Dendritic cell treated with granulocyte-macrophage colony-stimulating factor and Interleukin-4, amounts not matched to agents 40 ng/mL and 50 ng/mL, for 4 days (primary cell): ENCODE measurements at regions of chr1 and their contacts with region 1.

Region 1: DNA sequence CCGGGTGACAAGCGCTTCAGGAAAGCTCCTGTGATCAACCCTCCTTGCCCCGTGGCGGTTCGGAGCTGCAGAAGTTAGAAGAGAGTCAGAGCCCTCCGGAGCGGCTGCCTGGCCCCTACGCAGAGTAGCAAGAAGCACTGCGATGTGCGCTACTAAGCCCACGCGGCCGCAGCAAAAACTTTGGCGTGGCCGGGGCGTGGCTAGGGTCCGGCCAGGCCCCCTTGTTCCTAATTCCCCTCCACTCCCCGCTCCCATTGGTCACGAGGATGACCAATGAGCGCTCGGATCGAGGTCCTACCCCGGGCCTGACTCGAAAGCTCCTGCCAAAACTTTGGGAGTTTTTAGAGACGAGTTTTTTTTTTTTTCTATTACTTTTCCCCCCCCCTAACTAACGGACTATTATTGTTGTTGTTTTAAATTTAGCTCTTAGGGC is at the start of gene HLX:
- H3K4me3 Mint-ChIP-seq: peak within 1 kb of the TSS; percentile 99
- H3K27ac Mint-ChIP-seq: peak within 1 kb of the TSS; percentile 100
- H3K4me1 Mint-ChIP-seq: peaks cover 79% of the 10 kb centered on the region
- H3K27me3 Mint-ChIP-seq: peaks cover 13% of the 10 kb centered on the region

Region 2: DNA sequence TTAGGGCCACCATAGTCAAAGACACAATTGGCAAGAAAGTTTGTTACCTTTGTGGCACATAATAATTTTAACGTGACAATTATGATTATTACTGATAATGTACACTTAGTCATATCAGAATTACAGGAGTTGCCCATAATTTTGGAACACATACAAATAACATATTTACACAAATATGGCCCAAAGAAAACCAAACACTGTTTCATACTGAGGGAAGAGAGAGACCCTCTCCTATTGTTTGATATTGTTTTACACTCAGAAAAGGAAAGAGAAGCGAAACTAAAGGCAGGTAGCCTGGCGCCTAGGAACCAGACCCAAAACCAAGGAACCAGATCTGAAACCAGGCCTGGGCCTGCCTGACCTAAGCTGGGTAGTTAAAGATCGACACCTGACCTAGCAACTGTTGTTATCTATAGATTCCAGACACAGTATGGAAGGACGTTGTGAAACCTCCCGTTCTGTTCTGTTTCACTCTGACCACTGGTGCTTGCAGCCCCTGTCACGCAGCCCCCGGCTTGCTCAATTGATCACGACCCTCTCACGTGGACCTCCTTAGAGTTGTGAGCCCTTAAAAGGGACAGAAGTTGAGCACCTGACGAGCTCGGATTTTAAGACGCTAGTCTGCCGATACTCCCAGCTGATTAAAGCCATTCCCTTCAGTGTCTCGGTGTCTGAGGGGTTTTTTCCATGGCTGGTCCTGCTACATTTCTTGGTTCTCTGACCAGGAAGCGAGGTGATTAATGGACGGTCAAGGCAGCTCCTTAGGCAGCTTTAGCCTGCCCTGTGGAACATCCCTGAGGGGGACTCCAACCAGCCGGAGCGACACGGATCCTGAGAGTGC is 161.1 kb before region 1 on chr1:
- intact Hi-C with region 1: no loop called
- H3K4me3 Mint-ChIP-seq: no peak overlapping the region
- H3K27ac Mint-ChIP-seq: no peak overlapping the region
- H3K4me1 Mint-ChIP-seq: no peaks in the 10 kb centered on the region
- H3K27me3 Mint-ChIP-seq: peaks cover 2% of the 10 kb centered on the region

Region 3: GRCh38 chr1:220818421-220819173 is 60.5 kb before region 1 on chr1:
- intact Hi-C with region 1: no loop called
- H3K4me3 Mint-ChIP-seq: no peak overlapping the region
- H3K27ac Mint-ChIP-seq: no peak overlapping the region
- H3K4me1 Mint-ChIP-seq: peaks cover 5% of the 10 kb centered on the region
- H3K27me3 Mint-ChIP-seq: no peaks in the 10 kb centered on the region

Region 4: GRCh38 chr1:220999872-221000863 is 121.1 kb after region 1 on chr1:
- intact Hi-C with region 1: loop called (anchors 2 kb)
- H3K4me3 Mint-ChIP-seq: no peak overlapping the region
- H3K27ac Mint-ChIP-seq: no peak overlapping the region
- H3K4me1 Mint-ChIP-seq: no peaks in the 10 kb centered on the region
- H3K27me3 Mint-ChIP-seq: peaks cover 23% of the 10 kb centered on the region

Region 5: DNA sequence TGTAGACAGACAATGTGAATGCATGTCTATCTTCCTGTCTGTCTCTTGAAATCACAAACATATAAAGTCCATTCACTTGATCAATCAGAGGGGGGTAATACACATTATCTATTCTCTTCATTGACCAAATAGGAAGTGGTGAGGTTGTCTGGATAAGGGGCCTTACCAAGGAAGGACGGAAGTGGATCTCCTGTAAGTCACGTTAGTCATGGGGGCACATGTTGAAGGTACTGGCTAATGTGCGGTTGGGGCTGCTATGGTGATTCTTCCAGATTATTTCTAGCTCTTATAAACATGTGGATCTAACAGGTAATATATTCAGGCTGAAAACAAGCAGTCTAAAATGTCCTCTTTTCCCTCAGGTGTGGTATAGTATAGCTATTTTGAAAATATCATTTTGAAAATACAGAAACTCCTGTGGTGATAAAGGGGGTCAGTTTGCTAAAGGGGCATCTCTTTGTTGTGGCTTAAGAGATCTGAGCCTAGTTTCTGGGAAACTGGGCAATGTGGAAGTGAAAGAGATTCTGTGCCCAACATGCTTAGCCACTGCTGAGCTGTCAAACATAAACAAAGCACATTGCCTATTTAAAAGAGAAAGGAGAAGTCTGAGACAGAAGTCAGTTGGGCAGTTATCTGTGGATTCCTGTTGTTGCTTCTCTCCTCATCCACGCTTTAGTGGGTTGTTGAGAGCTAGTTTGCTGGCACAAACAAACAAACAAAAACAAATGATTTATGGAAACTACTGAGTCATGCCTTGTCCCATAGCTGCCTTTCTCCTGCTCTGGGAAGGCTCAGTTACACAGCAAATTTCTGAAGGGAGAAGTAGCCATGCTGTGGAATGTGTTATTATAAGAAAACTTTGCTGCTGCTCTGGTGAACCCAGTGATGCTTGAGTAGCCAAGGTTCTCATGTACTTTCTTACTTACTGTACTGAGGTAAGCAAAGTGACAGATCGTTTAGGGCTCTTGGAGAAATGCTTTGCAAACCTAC is 167.0 kb after region 1 on chr1:
- intact Hi-C with region 1: loop called (anchors 2 kb)
- H3K4me3 Mint-ChIP-seq: no peak overlapping the region
- H3K27ac Mint-ChIP-seq: peak overlapping the region; percentile 91
- H3K4me1 Mint-ChIP-seq: peaks cover 56% of the 10 kb centered on the region
- H3K27me3 Mint-ChIP-seq: no peaks in the 10 kb centered on the region

Region 6: DNA sequence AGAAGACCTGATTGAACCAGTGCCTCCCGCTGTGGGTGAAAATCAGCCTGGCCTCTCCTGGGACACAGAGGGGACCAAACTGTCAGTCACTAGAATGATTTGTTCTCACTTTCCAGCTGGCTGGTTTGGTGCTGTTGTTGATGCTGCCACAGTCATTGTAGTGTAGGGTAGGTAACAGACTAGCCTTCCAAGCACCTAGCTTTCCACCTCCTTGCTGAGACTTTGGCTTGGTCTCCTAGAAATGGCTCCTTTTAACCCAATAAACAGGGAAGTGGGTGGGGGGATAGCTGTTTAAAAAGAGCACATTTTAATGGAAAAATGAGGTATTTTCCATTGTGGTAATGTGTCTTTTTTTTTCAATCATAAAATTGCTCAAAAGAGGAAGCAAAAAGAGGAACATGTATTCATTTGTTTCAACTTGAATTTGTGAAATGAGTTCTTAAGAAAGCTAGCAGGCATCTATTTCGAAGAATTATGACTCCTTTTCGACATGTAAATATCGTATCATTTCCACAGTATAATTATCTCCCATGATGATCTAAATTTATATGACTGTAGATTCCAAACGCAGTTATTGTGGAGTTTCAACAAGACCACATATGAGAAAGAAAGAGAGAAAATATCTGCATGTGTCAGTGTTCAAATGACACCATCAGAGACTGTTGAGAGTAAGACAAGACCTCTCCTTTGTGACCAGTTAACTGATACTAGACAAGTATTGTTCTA is 190.2 kb after region 1 on chr1:
- intact Hi-C with region 1: loop called (anchors 2 kb)
- H3K4me3 Mint-ChIP-seq: peak overlapping the region; percentile 20
- H3K27ac Mint-ChIP-seq: peak overlapping the region; percentile 95
- H3K4me1 Mint-ChIP-seq: peaks cover 82% of the 10 kb centered on the region
- H3K27me3 Mint-ChIP-seq: peaks cover 2% of the 10 kb centered on the region

Region 7: GRCh38 chr1:221097479-221098383 is 218.6 kb after region 1 on chr1:
- intact Hi-C with region 1: loop called (anchors 1 kb)
- H3K4me3 Mint-ChIP-seq: peak overlapping the region; percentile 1
- H3K27ac Mint-ChIP-seq: peak overlapping the region; percentile 92
- H3K4me1 Mint-ChIP-seq: peaks cover 72% of the 10 kb centered on the region
- H3K27me3 Mint-ChIP-seq: peaks cover 5% of the 10 kb centered on the region

Region 8: DNA sequence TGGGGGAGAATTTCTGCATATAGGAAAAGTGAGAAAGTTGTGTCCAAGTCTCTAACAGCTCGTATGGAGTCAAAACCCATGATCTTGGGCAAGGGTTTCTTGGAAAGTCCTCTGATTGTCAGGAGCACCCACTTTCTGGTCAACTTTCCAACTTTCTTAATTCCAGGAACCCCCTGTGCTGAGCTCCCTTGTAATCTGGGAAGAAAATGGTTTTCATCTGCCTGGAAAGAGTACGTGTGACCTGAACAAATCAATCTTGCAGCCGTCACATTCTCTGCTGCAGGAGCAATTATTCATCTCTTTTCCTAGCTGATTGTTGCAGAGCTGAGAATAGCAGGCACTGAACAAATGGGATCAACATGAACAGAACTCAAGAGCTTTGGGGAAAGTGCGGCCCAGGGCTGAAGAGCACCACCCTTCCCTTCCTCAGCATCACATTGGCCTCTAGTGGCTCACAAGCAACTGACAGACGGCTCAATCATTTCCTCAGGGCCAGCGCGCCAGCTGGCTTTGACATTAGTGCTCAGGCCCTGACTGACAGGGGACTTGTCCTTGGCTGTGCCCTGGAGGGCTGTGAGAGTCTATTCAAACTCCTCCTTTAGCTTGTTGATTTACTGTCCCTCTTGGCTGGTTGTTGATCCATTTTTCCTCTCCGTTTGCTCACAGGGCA is 295.4 kb after region 1 on chr1:
- intact Hi-C with region 1: loop called (anchors 5 kb)
- H3K4me3 Mint-ChIP-seq: no peak overlapping the region
- H3K27ac Mint-ChIP-seq: no peak overlapping the region
- H3K4me1 Mint-ChIP-seq: peaks cover 33% of the 10 kb centered on the region
- H3K27me3 Mint-ChIP-seq: peaks cover 46% of the 10 kb centered on the region